Vagina (tissue), 2 donors: ENCODE measurements at regions of chr13 and their contacts with region 1.

Region 1: GRCh38 chr13:26985285-26985878 is 186.2 kb downstream of the USP12 start:
- DNase-seq: no peak
- H3K4me3 ChIP-seq: no peak overlapping the region
- H3K27ac ChIP-seq: no peak overlapping the region
- H3K4me1 ChIP-seq: peaks cover 21% of the 10 kb centered on the region
- H3K27me3 ChIP-seq: no peaks in the 10 kb centered on the region
- CTCF ChIP-seq: peak; percentile 66 to 88 (median 87)
- POLR2A ChIP-seq: no peak

Region 2: DNA sequence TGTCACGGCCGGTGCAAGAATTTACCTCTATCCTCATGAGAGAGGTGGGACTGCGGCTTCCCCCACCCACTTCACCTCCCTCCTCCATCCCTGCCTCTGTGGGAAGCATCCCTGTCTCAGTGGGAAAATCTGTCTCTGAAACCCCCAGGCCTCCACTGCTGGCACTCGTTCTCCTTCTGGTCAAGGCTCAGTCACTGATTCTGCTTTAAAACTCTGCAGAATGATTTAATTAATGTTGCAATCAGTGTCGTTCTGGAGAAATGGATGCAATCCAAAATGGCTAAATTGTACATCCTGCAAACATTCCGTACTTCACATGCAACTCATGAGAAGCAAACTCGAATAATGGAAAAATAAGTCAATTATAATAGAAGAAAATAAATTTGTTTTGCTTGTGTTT is 290.8 kb after region 1 on chr13:
- intact Hi-C with region 1: loop called (anchors 5 kb)
- DNase-seq: no peak
- H3K4me3 ChIP-seq: no peak overlapping the region
- H3K27ac ChIP-seq: peak overlapping the region; percentile 18
- H3K4me1 ChIP-seq: peaks cover 46% of the 10 kb centered on the region
- H3K27me3 ChIP-seq: no peaks in the 10 kb centered on the region
- CTCF ChIP-seq: no peak
- POLR2A ChIP-seq: no peak